Activated B cell treated with CpG ODN at 0.5 μM for 24 hours (primary cell): ENCODE measurements at regions of chr3 and their contacts with region 1.

Region 1: GRCh38 chr3:23761440-23761896 is 44.3 kb upstream of the UBE2E1 start:
- DNase-seq: no peak
- ATAC-seq: no peak
- H3K4me3 Mint-ChIP-seq: no peak overlapping the region
- H3K27ac Mint-ChIP-seq: peak overlapping the region; percentile 67
- H3K4me1 Mint-ChIP-seq: peaks cover 34% of the 10 kb centered on the region
- H3K27me3 Mint-ChIP-seq: no peaks in the 10 kb centered on the region
- CTCF ChIP-seq: no peak

Region 2: GRCh38 chr3:22916933-22917332 is 844.5 kb before region 1 on chr3:
- CTCF ChIA-PET with region 1: no interaction called
- POLR2A ChIA-PET with region 1: no interaction called
- intact Hi-C with region 1: loop called (anchors 5 kb)
- DNase-seq: no peak
- ATAC-seq: no peak
- H3K4me3 Mint-ChIP-seq: no peak overlapping the region
- H3K27ac Mint-ChIP-seq: no peak overlapping the region
- H3K4me1 Mint-ChIP-seq: no peaks in the 10 kb centered on the region
- H3K27me3 Mint-ChIP-seq: no peaks in the 10 kb centered on the region
- CTCF ChIP-seq: no peak

Region 3: DNA sequence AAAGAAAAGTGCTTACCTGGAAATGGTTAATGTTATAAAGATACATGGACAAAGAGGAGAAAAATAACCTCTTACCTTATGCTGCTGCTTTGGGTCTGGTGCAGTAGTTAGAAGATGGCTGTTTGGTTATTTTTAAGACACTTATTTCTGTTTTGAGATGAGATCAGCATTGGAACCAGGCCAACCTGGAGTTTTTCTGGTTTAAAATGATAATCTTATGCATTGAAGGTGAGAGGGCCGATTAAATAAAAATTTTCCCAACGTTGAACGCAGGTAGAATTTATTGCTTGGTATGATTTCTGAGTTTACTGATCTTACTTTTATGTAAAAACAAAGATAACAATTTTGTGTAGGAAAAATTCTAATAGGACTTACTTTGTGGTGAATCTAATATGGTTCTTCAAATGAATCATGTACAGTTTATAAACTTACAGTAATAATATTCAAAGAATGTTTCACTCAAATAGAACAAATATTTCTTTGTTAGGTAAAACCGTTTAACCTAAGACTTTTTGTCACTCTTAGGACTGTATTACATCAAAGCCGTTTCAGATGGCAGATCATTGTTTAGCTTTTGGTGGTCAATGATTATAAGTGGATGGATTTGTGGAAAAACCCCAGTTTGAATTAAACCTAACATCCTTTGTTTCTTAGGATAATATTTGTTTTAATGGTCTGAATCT is 543.5 kb before region 1 on chr3:
- CTCF ChIA-PET with region 1: no interaction called
- POLR2A ChIA-PET with region 1: no interaction called
- intact Hi-C with region 1: no loop called
- DNase-seq: no peak
- ATAC-seq: no peak
- H3K4me3 Mint-ChIP-seq: no peak overlapping the region
- H3K27ac Mint-ChIP-seq: no peak overlapping the region
- H3K4me1 Mint-ChIP-seq: peaks cover 56% of the 10 kb centered on the region
- H3K27me3 Mint-ChIP-seq: no peaks in the 10 kb centered on the region
- CTCF ChIP-seq: no peak

Region 4: DNA sequence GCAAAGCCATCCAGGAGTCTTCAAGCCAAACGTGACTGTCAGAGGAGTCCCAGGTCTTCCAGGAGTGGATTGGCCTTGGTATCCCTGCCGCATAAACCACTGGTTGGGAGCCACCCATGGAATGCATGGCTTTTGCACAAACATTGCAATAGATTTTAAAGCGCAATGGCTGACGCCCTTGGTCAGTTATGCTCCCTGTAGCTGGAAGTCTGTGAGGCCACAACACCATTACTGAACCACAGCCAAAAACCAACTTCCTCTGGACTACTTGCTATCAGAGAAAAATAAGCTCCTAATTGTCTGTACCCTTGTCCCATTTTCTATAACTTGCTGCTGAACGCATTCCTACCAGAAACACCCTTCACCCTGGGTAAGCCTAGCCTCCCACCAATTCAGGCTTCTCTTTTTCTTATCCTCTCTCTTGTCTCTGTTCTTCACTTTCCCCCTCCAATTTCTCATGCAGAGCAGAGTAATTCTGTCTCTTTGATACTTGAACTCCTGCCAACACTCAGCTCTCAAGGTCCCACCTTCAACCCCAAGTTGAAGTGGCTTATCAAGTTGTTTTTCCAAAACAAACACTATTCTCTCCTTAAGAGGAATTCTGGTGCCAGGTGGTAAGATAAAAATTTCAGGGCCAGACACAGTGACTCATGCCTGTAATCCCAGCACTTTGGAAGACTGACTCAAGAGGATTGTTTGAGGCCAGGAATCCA is 132.1 kb before region 1 on chr3:
- CTCF ChIA-PET with region 1: no interaction called
- POLR2A ChIA-PET with region 1: no interaction called
- intact Hi-C with region 1: no loop called
- DNase-seq: no peak
- ATAC-seq: no peak
- H3K4me3 Mint-ChIP-seq: no peak overlapping the region
- H3K27ac Mint-ChIP-seq: no peak overlapping the region
- H3K4me1 Mint-ChIP-seq: no peaks in the 10 kb centered on the region
- H3K27me3 Mint-ChIP-seq: no peaks in the 10 kb centered on the region
- CTCF ChIP-seq: no peak

Region 5: DNA sequence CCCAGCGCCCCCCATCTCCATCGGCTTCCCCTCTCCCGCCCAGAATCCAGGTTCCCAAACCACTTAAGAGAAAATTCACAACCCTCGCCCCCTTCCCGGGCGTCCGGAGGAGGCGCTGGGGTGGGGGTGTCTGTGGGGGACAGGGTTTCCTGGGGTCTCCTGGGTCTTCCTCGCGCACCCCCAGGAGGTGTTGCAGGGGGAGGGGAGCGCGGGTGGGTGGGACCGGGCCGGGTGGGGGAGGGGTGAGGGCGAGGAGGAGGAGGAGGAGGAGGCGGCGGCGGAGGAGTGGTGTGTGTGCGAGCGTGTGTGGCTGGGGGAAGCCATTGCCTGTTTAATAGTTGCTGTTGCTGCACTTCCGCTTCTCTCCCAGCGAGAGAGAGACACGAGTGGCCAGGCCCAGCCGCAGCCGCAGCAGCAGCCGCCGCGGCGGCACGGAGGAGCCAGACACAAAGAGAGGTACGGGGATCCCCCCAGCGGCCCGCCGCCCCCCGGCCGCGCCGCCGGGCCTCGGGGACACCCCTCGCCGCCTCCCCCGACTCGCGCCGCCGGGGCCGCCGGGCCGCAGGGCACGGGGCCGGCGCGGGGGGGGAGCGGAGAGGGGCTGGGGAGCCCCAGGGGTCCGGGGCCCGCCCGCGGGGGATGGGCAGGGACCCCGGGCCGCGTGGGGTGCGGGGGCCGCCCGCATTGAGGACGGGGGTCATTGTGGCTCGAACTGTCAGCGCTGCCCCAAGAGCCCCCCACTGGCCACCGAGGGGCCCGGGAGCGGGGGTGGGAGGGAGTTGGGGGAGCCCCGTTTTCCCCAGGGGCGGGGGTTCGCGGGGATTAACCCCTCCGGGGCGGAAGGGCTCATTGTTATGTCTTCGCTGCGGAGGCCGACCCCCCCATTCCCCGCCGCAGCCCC is 44.4 kb after region 1 on chr3 and contains the start of gene UBE2E1:
- CTCF ChIA-PET with region 1: no interaction called
- POLR2A ChIA-PET with region 1: no interaction called
- intact Hi-C with region 1: loop called (anchors 1 kb)
- DNase-seq: peak; percentile 68
- ATAC-seq: peak; percentile 77
- H3K4me3 Mint-ChIP-seq: peak within 1 kb of the TSS; percentile 97
- H3K27ac Mint-ChIP-seq: peak within 1 kb of the TSS; percentile 97
- H3K4me1 Mint-ChIP-seq: peaks cover 41% of the 10 kb centered on the region
- H3K27me3 Mint-ChIP-seq: no peaks in the 10 kb centered on the region
- CTCF ChIP-seq: no peak
- total RNA-seq, gene UBE2E1: 79.9 and 85.2 TPM in 2 replicates

Region 6: DNA sequence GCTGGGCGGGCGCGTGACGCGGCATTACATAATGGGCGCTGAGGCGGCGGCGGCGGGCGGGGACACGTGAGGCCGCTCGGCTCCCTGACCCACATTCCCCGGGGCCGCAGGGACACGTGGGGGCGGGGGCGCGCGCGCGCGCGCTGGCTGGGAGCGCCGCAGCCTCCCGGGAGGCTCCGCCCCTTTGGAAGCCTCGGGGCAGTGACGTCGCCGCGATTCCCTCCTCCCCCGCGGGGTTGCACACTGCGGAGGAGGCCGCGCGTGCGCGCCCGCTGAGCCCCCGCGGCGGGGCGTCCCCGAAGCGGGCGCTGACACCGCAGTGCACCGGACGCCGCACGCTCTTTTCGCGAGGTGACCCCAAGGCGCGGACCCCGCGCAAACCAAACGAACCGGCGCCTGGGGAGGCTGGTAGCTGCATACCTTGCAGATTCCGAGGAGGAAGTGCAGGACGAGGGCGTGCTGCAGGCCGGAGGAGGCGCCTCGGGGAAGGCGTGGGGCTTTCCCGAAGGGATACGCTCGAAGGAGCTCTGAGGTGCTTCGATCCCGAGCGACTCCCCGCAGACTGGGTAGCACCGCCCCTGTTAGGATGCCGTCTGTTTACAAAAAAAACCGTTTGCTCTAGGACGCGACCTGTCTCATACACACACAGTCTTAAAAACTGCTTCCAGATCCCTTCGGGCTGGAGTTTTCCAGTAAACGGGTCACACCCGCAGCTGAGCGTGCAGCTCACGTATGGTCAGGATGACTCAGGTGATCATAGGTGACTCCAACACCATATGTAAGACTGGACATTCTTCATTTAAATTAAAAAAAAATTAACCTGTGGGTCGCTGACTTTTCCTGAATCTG is 184.7 kb after region 1 on chr3:
- CTCF ChIA-PET with region 1: no interaction called
- POLR2A ChIA-PET with region 1: no interaction called
- intact Hi-C with region 1: loop called (anchors 5 kb)
- DNase-seq: peak; percentile 97
- ATAC-seq: peak; percentile 79
- H3K4me3 Mint-ChIP-seq: peak overlapping the region; percentile 86
- H3K27ac Mint-ChIP-seq: peak overlapping the region; percentile 94
- H3K4me1 Mint-ChIP-seq: peaks cover 44% of the 10 kb centered on the region
- H3K27me3 Mint-ChIP-seq: no peaks in the 10 kb centered on the region
- CTCF ChIP-seq: no peak